Cardiac septum (tissue), 1 donor: ENCODE measurements at regions of chr11 and their contacts with region 1.

Region 1: GRCh38 chr11:57712256-57713150 is at the start of gene TMX2:
- DNase-seq: peak; percentile 95
- total RNA-seq, gene TMX2: 56.7 TPM

Region 2: DNA sequence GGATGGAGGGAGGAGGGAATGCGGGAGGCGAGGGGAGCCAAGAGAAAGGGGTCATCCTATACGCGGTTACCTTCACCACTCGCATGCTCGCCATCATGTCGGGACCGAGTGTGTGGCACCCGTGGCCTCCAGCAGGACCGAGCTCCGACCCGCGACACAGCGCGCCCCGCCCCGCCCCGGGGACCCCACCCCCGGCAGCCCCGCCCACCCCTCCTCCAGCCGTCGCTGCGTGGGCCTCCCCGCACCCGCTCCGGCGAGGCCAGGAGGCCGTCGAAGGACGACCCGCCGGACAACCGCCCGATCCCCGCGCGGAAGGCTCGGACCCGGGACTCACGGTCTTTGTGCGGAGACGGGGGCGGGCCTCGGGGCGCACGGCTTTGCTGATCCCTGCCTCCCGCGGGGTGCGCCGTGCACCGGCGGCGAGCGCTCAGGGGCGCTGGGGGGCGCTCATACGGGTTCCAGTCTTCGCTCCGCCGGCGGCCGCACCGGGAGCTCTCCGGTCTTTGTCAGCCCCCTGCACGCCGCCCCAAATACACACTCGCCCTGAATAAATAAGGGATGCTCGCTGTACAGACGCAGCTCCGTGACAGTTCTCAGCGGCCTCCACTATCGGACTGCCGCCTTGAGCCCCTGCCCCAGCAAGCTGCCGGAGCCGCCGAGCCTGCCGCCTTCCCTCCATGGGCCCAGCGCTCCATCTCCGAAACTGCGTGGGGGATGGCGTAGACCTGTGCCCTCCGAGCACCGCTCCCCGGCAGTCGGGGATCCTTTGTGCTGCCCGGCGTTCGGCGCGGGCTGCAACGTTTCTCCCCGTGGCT is 144.8 kb before region 1 on chr11 and contains the start of gene UBE2L6:
- intact Hi-C with region 1: loop called (anchors 2 kb)
- DNase-seq: peak; percentile 89
- total RNA-seq, gene UBE2L6: 15.8 TPM

Region 3: DNA sequence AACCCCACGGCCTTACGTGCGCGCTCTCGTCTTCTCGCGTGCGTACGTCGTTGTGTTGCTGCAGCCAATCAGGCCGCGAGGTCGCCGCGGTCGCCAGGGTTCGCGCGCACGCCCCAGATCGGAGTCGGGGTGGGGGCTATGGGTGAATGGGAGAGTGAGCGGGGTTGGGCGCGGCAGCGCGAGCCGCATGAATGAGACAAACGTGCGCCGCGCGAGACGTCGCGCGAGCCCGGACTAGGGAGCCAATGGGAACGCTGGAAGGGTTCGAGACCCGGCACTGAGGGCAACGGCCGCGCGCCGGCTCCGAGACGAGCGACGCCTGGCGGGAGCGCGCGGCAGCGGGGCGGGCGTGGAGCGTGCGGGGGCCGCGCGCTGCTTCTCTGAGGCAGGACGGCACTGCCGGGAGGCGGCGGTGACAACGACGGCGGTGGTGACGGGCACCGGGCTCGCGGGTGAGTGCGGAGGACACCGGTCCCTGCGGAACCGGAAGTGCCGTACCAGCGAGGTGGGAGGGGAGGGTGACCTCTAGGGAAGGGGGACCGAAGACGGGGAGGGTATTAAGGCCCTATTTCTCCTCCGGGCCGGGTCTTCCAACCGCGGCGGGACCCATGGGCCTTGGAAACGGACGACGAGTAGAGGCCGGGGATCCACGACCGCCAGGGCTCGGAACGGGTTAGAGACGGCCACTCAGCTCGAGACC is 44.6 kb before region 1 on chr11 and contains the start of gene ZDHHC5:
- intact Hi-C with region 1: loop called (anchors 5 kb)
- DNase-seq: peak; percentile 99
- total RNA-seq, gene ZDHHC5: 43.4 TPM

Region 4: DNA sequence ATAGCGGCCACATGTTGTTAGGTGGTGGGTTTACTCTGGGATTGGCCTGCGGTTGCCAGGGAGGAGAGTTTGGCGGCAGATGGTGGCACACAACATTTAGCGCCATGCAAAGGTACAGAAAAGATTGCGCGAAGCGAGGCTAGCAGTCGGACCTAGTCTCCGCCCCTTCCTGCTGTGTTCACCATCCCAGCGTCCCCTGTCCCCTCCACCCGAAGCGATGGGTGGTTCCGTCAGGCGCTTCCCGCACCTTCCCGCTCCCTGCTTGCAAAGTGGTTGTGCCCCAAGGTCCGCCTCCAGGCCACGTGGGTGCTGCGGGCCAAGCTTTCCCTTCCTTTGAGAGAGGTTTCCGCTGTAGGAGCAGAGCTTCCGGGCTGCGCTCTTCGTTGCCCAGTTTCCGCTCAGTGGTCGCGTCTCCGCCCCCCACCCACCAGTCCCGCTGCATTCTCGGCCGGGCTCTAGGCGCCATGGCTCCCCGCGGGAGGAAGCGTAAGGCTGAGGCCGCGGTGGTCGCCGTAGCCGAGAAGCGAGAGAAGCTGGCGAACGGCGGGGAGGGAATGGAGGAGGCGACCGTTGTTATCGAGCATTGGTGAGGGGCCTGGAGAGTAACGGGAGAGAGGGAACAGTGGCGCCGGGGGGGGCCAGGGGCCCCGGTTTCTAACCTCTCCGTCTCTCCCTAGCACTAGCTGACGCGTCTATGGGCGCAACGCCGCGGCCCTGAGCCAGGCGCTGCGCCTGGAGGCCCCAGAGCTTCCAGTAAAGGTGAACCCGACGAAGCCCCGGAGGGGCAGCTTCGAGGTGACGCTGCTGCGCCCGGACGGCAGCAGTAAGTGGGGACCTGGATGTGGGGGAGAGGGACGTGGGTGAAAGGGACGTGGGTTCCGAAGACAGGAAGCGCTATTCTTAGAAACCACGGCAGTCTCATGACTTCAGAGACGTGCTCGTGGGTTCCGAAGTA is 28.9 kb after region 1 on chr11 and contains the start of gene SELENOH:
- intact Hi-C with region 1: loop called (anchors 2 kb)
- DNase-seq: peak; percentile 97
- total RNA-seq, gene SELENOH: 85.5 TPM